Activated CD4-positive, alpha-beta memory T cell treated with anti-CD3 and anti-CD28 coated beads for 36 hours (primary cell): ENCODE measurements at regions of chr5 and their contacts with region 1.

Region 1: DNA sequence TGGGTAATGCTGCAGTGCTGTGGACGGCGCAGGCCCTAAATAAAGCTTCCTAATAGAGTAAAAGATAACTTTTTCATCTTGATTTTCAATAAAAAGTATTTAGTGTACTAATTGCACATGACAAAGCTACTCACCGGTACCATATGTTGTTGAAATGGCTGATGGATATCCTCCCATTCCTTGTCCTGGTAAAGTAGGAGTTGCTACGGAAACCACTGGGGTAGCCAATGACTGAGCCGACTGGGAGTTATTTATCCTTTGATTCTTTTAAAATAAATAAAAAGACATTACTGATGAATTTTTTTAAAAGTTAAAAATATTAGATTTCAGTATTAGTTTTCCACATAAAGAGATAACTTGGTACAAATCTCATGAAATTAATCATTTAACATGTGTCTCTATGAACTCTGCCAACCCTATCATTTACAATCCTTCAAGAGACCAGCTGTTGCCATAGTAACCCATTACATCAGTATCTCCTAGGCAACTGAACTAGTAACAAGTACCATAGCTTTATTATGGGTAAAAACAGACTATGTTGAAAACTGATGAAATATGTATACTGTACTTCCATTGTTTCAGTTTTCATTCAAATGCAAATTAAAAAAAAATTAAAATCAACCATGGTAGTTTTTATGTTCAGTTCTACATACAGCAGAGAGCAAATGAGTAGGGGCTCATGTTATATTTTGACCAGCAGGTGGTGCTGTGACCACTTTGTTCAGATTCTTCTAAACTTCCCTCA is 153.7 kb downstream of the MEF2C start:
- DNase-seq: peak; percentile 62
- H3K4me3 Mint-ChIP-seq: no peak overlapping the region
- H3K27ac Mint-ChIP-seq: no peak overlapping the region
- H3K4me1 Mint-ChIP-seq: peaks cover 2% of the 10 kb centered on the region
- H3K27me3 Mint-ChIP-seq: peaks cover 13% of the 10 kb centered on the region

Region 2: DNA sequence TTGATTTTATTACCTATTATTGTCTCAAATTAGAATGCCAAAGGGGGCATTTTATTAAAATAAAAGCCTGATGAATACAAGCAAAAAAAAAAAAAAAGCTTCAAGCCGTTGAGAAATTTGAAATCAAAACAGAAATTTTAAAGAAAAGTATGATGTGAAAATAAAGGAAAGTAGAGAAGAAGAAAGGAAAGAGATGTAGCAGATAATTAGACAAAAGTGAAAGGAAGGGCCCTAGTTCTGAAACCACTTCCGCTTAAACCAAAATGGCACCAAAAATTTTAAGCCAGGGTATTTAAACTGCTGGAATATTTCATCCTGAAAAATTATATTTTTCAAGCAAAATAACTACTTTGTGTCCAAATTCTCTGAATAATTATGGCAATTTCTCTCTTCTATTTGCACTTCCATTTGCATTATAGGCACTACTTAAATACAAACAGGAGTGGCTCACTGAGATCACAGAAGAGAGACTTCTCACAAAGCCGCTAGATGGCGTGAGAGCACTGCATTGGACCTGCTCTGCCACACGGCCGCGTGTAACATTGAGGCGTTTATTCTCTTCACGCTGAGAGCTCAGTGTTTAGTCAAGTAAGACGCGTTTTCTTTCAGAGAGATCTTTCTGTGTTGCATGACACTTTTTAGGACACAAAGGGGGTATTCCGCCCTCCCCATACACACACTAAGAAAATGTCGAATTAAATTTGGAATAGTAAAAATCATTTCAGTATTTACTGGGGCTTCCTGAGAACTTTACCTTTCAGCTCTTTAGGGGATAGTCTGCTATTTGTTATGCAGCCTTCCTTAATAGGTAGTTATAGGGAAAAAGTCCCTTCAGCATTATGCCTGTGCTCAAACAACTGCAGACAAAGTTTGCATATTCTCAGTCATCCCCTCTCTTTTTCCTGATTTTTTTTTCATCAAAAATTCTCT is 948.2 kb before region 1 on chr5:
- CTCF ChIA-PET with region 1: interaction called, 37 read pairs
- POLR2A ChIA-PET with region 1: no interaction called
- intact Hi-C with region 1: loop called (anchors 1 kb)
- DNase-seq: peak; percentile 82
- H3K4me3 Mint-ChIP-seq: no peak overlapping the region
- H3K27ac Mint-ChIP-seq: no peak overlapping the region
- H3K4me1 Mint-ChIP-seq: no peaks in the 10 kb centered on the region
- H3K27me3 Mint-ChIP-seq: peaks cover 18% of the 10 kb centered on the region

Region 3: DNA sequence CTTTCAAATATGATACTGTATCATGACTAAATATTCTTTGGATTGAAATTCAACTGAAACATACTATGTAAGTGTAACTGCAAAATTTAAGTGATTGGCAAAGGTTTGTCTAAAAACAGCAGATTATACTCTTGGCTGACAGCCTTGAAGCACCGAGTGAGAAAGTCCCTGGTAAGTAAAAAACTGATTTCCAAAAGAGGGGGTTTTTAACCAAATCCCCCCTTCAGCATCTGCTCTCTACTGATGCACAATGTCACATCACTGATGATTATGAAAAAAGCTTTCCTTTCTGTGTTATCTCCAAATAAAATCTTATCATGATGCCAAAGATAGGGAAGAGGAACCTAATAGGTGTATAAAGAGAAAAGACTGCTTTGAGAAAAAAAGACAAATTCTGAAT is 12.7 kb after region 1 on chr5:
- CTCF ChIA-PET with region 1: interaction called, 29 read pairs
- POLR2A ChIA-PET with region 1: no interaction called
- intact Hi-C with region 1: no loop called
- DNase-seq: no peak
- H3K4me3 Mint-ChIP-seq: no peak overlapping the region
- H3K27ac Mint-ChIP-seq: no peak overlapping the region
- H3K4me1 Mint-ChIP-seq: no peaks in the 10 kb centered on the region
- H3K27me3 Mint-ChIP-seq: peaks cover 9% of the 10 kb centered on the region

Region 4: DNA sequence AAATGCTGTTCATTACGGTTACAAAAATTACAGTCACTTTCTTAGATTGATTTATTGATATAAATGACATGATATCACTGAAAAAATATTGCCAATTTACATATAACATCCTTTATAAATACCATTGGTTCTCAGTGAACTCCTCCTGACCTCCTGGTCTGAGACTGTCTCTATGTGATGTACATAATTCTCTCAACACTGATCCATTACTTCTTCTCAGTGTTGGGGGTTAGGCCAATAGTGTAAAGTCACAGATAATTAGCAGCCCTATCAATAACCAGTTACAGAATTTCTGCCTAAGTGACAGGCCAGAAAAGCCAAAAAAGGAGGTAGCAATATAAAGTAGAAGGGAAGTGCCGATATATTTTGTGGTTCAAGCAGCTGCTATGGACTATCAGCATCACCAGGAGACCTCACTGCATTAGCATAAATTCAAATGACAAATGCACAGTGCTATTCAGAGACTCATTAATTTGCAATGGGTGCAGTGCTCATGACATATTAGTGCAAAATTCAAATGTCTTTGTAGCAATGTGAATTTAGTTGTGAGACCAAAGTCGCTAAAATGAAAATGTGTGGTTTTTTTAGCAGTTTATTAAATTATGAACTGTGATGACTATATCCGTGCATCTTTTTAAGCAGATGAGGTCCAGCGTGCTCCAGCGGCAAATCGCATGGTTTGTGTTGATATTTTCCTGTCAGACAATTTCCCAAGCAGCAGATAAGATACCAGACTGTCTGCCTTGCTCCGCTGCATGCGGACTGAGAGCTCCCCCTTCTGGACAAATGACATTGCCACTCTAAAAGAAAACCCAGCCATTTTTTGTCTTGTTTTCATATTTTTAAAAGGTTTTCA is 1535.7 kb after region 1 on chr5:
- CTCF ChIA-PET with region 1: interaction called, 53 read pairs
- POLR2A ChIA-PET with region 1: no interaction called
- intact Hi-C with region 1: loop called (anchors 1 kb)
- DNase-seq: peak; percentile 63
- H3K4me3 Mint-ChIP-seq: no peak overlapping the region
- H3K27ac Mint-ChIP-seq: no peak overlapping the region
- H3K4me1 Mint-ChIP-seq: no peaks in the 10 kb centered on the region
- H3K27me3 Mint-ChIP-seq: peaks cover 2% of the 10 kb centered on the region

Region 5: GRCh38 chr5:90434116-90434714 is 1705.0 kb after region 1 on chr5:
- CTCF ChIA-PET with region 1: interaction called, 10 read pairs
- POLR2A ChIA-PET with region 1: no interaction called
- intact Hi-C with region 1: loop called (anchors 2 kb)
- DNase-seq: peak; percentile 57
- H3K4me3 Mint-ChIP-seq: no peak overlapping the region
- H3K27ac Mint-ChIP-seq: no peak overlapping the region
- H3K4me1 Mint-ChIP-seq: no peaks in the 10 kb centered on the region
- H3K27me3 Mint-ChIP-seq: no peaks in the 10 kb centered on the region